Tibial artery (tissue), 4 donors: ENCODE measurements at regions of chr21 and their contacts with region 1.

Region 1: DNA sequence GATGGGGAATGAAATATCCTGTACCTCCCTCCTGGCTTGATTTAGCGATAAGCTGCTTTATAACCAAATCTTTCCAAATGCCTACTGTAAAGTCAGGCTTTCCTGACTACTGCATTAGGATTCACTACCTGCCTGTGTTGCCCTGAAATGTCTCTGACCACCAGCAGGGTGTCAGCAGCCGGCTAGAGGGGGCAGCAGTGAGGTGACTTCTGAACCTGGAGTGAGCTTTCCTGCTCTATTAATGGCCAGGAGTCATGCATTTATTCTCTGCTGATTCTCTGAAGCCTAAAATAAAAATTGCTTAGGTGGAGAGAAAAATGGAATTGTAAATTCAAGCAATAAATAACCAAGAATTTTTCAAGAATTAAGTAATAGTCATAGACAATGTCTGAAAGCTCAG is 2.5 kb downstream of the BACE2 start:
- DNase-seq: peak in 1 of 2 donors; percentile 51
- H3K4me3 ChIP-seq: peak overlapping the region; percentile 87 to 94
- H3K27ac ChIP-seq: peak overlapping the region; percentile 53 to 99
- H3K4me1 ChIP-seq: peaks cover 0 to 67% (median 37%) of the 10 kb centered on the region in 4 donors
- H3K27me3 ChIP-seq: no peaks in the 10 kb centered on the region
- CTCF ChIP-seq: peak; percentile 57 to 60

Region 2: GRCh38 chr21:42878993-42879787 is 1708.7 kb after region 1 on chr21 and contains the start of gene WDR4:
- intact Hi-C with region 1: loop called (anchors 10 kb)
- DNase-seq: peak; percentile 95 to 98
- H3K4me3 ChIP-seq: peak within 1 kb of the TSS; percentile 64 to 95
- H3K27ac ChIP-seq: peak within 1 kb of the TSS; percentile 75 to 82
- H3K4me1 ChIP-seq: peaks cover 0 to 15% (median 11%) of the 10 kb centered on the region in 4 donors
- H3K27me3 ChIP-seq: no peaks in the 10 kb centered on the region
- CTCF ChIP-seq: no peak